ENCODE measurements at regions of chr13 and their contacts with region 1.

Region 1: GRCh38 chr13:32586080-32586900 is at the start of gene PDS5B:
- DNase-seq: peak; percentile 91 to 93
- ATAC-seq: peak; percentile 87 to 92
- H3K4me3 ChIP-seq: peak within 1 kb of the TSS; percentile 68 to 83 (median 74)
- H3K27ac ChIP-seq: peak within 1 kb of the TSS; percentile 89 to 94 (median 92)
- H3K4me1 ChIP-seq: peaks cover 27 to 33% of the 10 kb centered on the region in 2 donors
- H3K27me3 ChIP-seq: no peaks in the 10 kb centered on the region
- CTCF ChIP-seq: peak; percentile 80 to 99 (median 98)
- POLR2A ChIP-seq: peak; percentile 56 to 64
- total RNA-seq, gene PDS5B: 18.0 to 27.3 (median 21.2) TPM

Region 2: GRCh38 chr13:32381539-32381938 is 204.8 kb before region 1 on chr13:
- in situ Hi-C with region 1: loop called in 1 of 4 experiments (anchors 10 kb)
- intact Hi-C with region 1: loop called (anchors 1 kb)
- DNase-seq: no peak
- ATAC-seq: peak; percentile 39 to 45
- H3K4me3 ChIP-seq: no peak overlapping the region
- H3K27ac ChIP-seq: no peak overlapping the region
- H3K4me1 ChIP-seq: no peaks in the 10 kb centered on the region
- H3K27me3 ChIP-seq: no peaks in the 10 kb centered on the region
- CTCF ChIP-seq: peak in 4 of 5 experiments; percentile 19 to 53 (median 37)
- POLR2A ChIP-seq: no peak

Region 3: GRCh38 chr13:32538621-32539246 is 47.6 kb before region 1 on chr13 and contains the start of gene N4BP2L2:
- in situ Hi-C with region 1: no loop called
- intact Hi-C with region 1: loop called (anchors 1 kb)
- DNase-seq: peak; percentile 95
- ATAC-seq: peak; percentile 96 to 98
- H3K4me3 ChIP-seq: peak within 1 kb of the TSS; percentile 77 to 94 (median 90)
- H3K27ac ChIP-seq: peak within 1 kb of the TSS; percentile 88 to 99 (median 97)
- H3K4me1 ChIP-seq: peaks cover 37 to 40% of the 10 kb centered on the region in 2 donors
- H3K27me3 ChIP-seq: no peaks in the 10 kb centered on the region
- CTCF ChIP-seq: peak in 1 of 5 experiments; percentile 36
- POLR2A ChIP-seq: peak; percentile 65 to 79
- total RNA-seq, gene N4BP2L2: 52.2 to 370 (median 176) TPM

Region 4: DNA sequence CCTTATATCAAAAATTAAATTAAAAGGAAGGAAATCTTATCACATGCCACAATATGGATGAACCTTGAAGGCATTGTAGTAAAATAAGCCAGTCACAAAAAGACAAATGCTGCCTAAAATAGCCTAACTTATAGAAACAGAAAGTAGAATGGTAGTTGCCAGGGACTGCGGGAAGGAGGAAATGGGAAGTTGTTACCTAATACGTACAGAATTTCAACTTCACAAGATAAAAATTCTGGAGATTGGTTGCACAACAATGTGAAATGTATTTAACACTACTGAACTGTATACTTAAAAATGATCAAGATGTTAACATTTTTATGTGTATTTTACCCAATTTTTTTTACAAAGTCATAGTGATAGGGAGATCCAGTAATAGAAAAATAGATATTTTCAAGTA is 37.5 kb before region 1 on chr13:
- in situ Hi-C with region 1: no loop called
- intact Hi-C with region 1: no loop called
- DNase-seq: no peak
- ATAC-seq: no peak
- H3K4me3 ChIP-seq: no peak overlapping the region
- H3K27ac ChIP-seq: no peak overlapping the region
- H3K4me1 ChIP-seq: no peaks in the 10 kb centered on the region
- H3K27me3 ChIP-seq: no peaks in the 10 kb centered on the region
- CTCF ChIP-seq: no peak
- POLR2A ChIP-seq: no peak

Region 5: DNA sequence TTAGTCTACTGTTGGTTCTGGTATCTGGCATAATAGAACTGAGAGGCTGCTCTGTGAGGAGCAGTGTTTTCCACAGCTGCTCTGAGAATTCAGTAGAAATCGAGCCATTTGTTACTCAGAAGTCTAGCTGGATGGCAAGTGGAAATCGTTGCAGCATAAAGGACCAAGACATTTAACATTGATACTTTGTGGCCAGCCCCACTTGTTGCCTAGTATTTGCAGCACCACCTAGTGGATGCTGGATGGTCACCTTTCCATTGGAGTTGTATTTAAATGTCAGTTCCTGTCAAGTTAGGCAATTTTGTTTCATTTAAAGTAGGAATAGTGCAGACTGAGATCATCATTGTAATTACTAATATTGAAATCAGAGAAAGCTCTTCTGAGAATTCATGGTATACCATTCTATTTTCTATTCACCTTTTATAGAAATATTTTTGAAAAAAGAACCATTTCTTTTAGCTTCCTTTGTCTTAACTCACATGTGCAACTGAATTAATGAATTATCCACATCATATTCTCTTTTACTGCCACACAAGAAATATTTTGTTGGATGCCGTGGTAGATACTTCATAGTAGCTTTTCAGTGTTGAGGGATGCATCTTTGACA is 64.5 kb after region 1 on chr13:
- in situ Hi-C with region 1: no loop called
- intact Hi-C with region 1: loop called (anchors 1 kb)
- DNase-seq: peak in 1 of 2 donors; percentile 42
- ATAC-seq: peak in 1 of 2 donors; percentile 75
- H3K4me3 ChIP-seq: no peak overlapping the region
- H3K27ac ChIP-seq: no peak overlapping the region
- H3K4me1 ChIP-seq: peaks cover 9% of the 10 kb centered on the region in 2 donors
- H3K27me3 ChIP-seq: no peaks in the 10 kb centered on the region
- CTCF ChIP-seq: peak; percentile 32 to 74 (median 43)
- POLR2A ChIP-seq: no peak

Region 6: GRCh38 chr13:33285420-33286124 is 699.3 kb after region 1 on chr13 and contains the start of gene STARD13:
- in situ Hi-C with region 1: no loop called
- intact Hi-C with region 1: loop called (anchors 10 kb)
- DNase-seq: peak; percentile 92 to 93
- ATAC-seq: peak; percentile 92 to 94
- H3K4me3 ChIP-seq: peak within 1 kb of the TSS; percentile 70 to 84 (median 74)
- H3K27ac ChIP-seq: peak within 1 kb of the TSS; percentile 84 to 93 (median 90)
- H3K4me1 ChIP-seq: peaks cover 21 to 33% of the 10 kb centered on the region in 2 donors
- H3K27me3 ChIP-seq: no peaks in the 10 kb centered on the region
- CTCF ChIP-seq: peak; percentile 18 to 45 (median 37)
- POLR2A ChIP-seq: peak; percentile 79 to 91
- total RNA-seq, gene STARD13: 7.7 to 19.3 (median 12.0) TPM

Measured in gastrocnemius medialis (tissue), 4 donors.